ENCODE measurements at regions of chr11 and their contacts with region 1.

Region 1: DNA sequence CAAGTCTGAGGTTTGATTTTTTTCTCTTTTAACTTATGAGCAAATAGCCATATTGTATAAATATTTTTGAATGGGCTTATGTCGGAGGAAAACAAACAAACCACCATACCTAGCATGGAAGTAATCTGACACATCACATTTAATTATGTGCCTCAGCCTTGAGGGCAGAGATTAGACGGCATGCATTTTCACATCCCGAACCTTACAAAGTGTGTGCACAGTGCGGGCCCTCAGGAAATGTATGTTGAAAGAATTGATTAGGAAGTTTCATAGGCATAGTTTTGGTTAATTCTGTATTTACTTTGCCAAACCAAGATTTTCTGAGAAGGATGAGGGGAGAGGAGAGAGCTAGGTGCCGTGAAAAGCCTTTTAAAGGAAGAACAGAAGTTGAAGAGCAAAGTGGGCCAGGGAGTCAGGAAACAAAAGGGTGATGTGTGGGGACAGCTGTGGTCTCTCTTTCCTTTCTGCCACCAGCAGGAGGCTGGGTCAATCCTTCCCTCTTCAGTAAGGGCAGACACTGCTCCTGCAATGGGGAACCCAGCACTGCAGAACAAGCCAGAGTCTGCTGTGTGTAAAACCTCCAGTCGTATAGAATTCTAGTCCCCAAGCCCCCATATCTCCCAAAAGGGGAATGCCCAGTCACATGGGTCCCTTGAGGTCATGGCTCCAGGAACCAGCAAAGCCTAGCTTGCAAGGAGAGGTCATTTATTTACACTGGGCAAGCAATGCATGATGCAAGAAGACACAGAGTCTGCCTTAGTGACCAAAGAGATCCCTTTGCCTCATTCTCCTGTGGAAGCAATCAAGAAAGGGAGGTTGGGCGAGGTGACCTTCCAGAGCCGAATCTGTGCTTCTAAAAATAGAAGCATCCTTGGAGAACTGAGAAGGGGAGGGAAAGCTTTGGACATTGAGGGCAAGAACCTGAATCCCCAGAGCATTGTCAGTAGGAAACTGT is 71.1 kb upstream of the OLFML1 start:
- DNase-seq: no peak
- ATAC-seq: peak; percentile 64
- H3K4me3 Mint-ChIP-seq: no peak overlapping the region
- H3K27ac Mint-ChIP-seq: no peak overlapping the region
- H3K4me1 Mint-ChIP-seq: peaks cover 39% of the 10 kb centered on the region
- H3K27me3 Mint-ChIP-seq: no peaks in the 10 kb centered on the region
- CTCF ChIP-seq: no peak

Region 2: DNA sequence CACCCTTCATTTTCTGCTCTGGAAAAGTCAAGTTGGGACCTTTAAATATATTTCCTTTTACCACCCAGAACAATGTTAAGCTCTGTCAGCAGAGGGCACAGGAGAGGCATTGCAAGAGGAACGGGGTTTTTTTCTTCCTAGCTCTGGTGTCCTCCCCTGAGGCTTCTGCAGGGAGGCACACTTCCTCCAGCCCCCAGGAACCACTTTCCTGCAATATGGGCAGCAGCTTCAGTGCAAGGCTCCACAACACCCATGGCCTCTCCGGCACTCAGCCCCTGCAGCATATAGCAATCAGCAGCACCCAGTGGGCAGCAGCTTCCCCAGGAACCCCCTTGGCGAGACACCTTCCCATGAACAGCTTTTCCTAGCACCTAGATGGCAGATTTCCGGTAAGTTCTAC is 61.1 kb before region 1 on chr11:
- CTCF ChIA-PET with region 1: interaction called, 14 read pairs
- POLR2A ChIA-PET with region 1: no interaction called
- DNase-seq: peak; percentile 41
- ATAC-seq: peak; percentile 96
- H3K4me3 Mint-ChIP-seq: no peak overlapping the region
- H3K27ac Mint-ChIP-seq: no peak overlapping the region
- H3K4me1 Mint-ChIP-seq: peaks cover 14% of the 10 kb centered on the region; the same call in 1 of the 2 replicates
- H3K27me3 Mint-ChIP-seq: no peaks in the 10 kb centered on the region; the same call in 1 of the 2 replicates
- CTCF ChIP-seq: 0 out of 2 replicates have a peak, but pooled peaks have one; percentile 37

Region 3: GRCh38 chr11:7442588-7443215 is 28.5 kb after region 1 on chr11:
- CTCF ChIA-PET with region 1: interaction called, 24 read pairs
- POLR2A ChIA-PET with region 1: no interaction called
- DNase-seq: peak; percentile 89
- ATAC-seq: peak; percentile 93
- H3K4me3 Mint-ChIP-seq: no peak overlapping the region
- H3K27ac Mint-ChIP-seq: no peak overlapping the region
- H3K4me1 Mint-ChIP-seq: peaks cover 3% of the 10 kb centered on the region; the same call in 1 of the 2 replicates
- H3K27me3 Mint-ChIP-seq: peaks cover 3% of the 10 kb centered on the region; the same call in 1 of the 2 replicates
- CTCF ChIP-seq: peak; percentile 87